ENCODE measurements at regions of chr6 and their contacts with region 1.

Region 1: GRCh38 chr6:2931970-2932748 is 29.1 kb upstream of the SERPINB9 start:
- DNase-seq: peak; percentile 91
- H3K4me3 ChIP-seq: peak overlapping the region in 1 of 4 donors; percentile 35
- H3K27ac ChIP-seq: no peak overlapping the region
- H3K4me1 ChIP-seq: peaks cover 0 to 4% (median 2%) of the 10 kb centered on the region in 4 donors
- H3K27me3 ChIP-seq: no peaks in the 10 kb centered on the region
- CTCF ChIP-seq: peak; percentile 95 to 97 (median 96)
- EP300 ChIP-seq: no peak
- POLR2A ChIP-seq: no peak

Region 2: GRCh38 chr6:2505624-2506023 is 426.5 kb before region 1 on chr6:
- in situ Hi-C with region 1: no loop called
- intact Hi-C with region 1: no loop called
- DNase-seq: no peak
- H3K4me3 ChIP-seq: no peak overlapping the region
- H3K27ac ChIP-seq: no peak overlapping the region
- H3K4me1 ChIP-seq: no peaks in the 10 kb centered on the region
- H3K27me3 ChIP-seq: peaks cover 31% of the 10 kb centered on the region
- CTCF ChIP-seq: peak in 1 of 5 experiments; percentile 8
- EP300 ChIP-seq: no peak
- POLR2A ChIP-seq: no peak

Region 3: GRCh38 chr6:2783188-2783963 is 148.8 kb before region 1 on chr6:
- in situ Hi-C with region 1: loop called in 2 of 4 experiments (anchors 10 kb)
- intact Hi-C with region 1: no loop called
- DNase-seq: peak; percentile 41
- H3K4me3 ChIP-seq: no peak overlapping the region
- H3K27ac ChIP-seq: peak overlapping the region; percentile 26 to 62 (median 49)
- H3K4me1 ChIP-seq: peaks cover 0 to 17% (median 7%) of the 10 kb centered on the region in 4 donors
- H3K27me3 ChIP-seq: no peaks in the 10 kb centered on the region
- CTCF ChIP-seq: peak in 2 of 5 experiments; percentile 8 to 19
- EP300 ChIP-seq: no peak
- POLR2A ChIP-seq: no peak

Region 4: GRCh38 chr6:2791124-2791974 is 140.8 kb before region 1 on chr6:
- in situ Hi-C with region 1: loop called in 3 of 4 experiments (anchors 10 kb)
- intact Hi-C with region 1: loop called (anchors 10 kb)
- DNase-seq: peak; percentile 77
- H3K4me3 ChIP-seq: no peak overlapping the region
- H3K27ac ChIP-seq: peak overlapping the region; percentile 71 to 82 (median 75)
- H3K4me1 ChIP-seq: peaks cover 9 to 33% (median 14%) of the 10 kb centered on the region in 4 donors
- H3K27me3 ChIP-seq: no peaks in the 10 kb centered on the region
- CTCF ChIP-seq: peak; percentile 66 to 91 (median 72)
- EP300 ChIP-seq: no peak
- POLR2A ChIP-seq: no peak

Region 5: DNA sequence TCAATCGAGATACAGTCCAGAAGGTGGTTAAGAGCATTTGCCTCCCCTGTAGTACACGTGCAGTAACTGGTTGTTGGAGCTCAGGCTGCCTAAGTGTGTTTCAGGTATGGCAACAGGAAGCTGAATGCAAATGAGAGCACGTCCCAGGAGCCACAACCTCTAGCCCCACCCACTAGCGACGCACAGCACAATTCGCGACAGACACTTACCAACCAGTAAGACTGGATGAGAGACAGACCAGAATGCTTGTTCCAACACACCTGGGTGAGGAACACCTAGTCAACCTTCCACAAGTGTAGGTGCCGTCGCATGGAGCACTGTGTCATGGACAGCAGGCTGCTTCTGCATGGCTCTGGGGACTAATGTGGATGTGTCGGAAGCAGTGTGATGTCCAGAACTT is 83.3 kb before region 1 on chr6:
- in situ Hi-C with region 1: loop called in 1 of 4 experiments (anchors 10 kb)
- intact Hi-C with region 1: loop called (anchors 5 kb)
- DNase-seq: peak; percentile 58
- H3K4me3 ChIP-seq: no peak overlapping the region
- H3K27ac ChIP-seq: no peak overlapping the region
- H3K4me1 ChIP-seq: peaks cover 3 to 18% (median 11%) of the 10 kb centered on the region in 4 donors
- H3K27me3 ChIP-seq: no peaks in the 10 kb centered on the region
- CTCF ChIP-seq: no peak
- EP300 ChIP-seq: no peak
- POLR2A ChIP-seq: no peak

Region 6: DNA sequence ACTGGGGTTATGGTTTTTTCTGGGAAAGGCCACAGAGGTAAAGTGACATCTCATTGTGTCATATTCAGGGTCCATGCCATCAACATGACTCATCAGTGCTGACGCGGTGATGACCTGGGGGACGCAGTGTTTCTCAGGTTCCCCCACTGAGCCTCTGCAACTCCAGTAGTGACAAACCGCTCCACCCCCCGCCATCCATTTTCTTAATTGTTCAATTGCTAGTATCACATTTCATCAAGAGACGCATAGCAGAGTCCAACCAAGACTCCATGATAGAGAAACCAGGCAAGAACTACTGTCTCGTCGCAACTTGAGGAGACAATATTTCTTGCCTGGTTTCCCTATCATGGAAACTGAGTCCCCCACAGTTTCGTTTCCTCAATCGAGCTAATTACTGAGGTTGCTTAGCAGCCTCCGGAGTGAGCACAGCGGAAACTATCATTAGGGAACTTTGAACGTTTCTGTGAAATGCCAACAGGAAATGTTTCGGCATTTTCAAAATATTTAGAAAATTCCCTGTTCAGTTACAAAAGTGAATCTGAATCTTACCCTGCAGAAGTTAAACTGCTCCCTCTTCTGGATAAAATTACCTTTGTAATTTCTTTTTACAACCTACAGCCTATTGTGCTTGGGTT is 78.3 kb before region 1 on chr6:
- in situ Hi-C with region 1: loop called in 1 of 4 experiments (anchors 10 kb)
- intact Hi-C with region 1: loop called (anchors 5 kb)
- DNase-seq: peak; percentile 54
- H3K4me3 ChIP-seq: peak overlapping the region in 3 of 4 donors; percentile 21 to 46 (median 31)
- H3K27ac ChIP-seq: peak overlapping the region; percentile 49 to 63 (median 56)
- H3K4me1 ChIP-seq: peaks cover 16 to 29% (median 22%) of the 10 kb centered on the region in 4 donors
- H3K27me3 ChIP-seq: no peaks in the 10 kb centered on the region
- CTCF ChIP-seq: peak; percentile 24 to 52 (median 35)
- EP300 ChIP-seq: no peak
- POLR2A ChIP-seq: no peak

Region 7: DNA sequence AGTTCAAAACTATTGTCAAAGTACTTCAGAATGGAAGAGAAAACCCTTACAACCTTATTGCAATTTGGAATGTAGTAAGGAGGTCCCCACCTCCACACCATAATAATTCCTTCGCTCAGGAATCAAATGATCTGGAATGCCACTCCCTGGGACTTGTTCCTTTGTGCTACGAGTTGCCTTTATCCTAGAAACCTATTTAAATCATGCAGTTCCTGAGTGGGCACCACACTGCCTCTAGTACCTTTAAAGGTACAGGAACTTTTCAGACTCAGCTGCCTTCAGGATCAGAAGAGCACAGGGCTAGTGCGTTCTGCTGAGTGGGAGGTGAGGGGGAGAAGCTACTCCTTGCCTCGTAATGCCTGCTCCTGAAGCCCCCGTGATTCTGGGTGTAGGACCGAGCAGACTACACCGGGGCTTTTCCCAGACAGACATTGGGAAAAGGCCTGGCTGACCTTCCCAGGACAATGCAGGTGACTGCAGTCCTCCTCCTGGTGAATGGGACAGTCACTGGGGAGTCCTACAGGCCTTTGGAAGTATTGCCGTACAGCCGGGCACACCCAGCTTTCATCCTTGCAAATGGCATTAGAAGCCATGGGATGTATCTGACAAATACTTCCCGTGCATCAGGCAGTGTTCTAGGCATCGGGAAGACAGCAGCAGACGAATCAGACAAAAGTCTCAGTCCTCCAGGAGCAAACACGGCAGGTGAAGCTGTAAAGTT is 307.1 kb after region 1 on chr6:
- in situ Hi-C with region 1: no loop called
- intact Hi-C with region 1: no loop called
- DNase-seq: no peak
- H3K4me3 ChIP-seq: no peak overlapping the region
- H3K27ac ChIP-seq: no peak overlapping the region
- H3K4me1 ChIP-seq: no peaks in the 10 kb centered on the region
- H3K27me3 ChIP-seq: peaks cover 58% of the 10 kb centered on the region
- CTCF ChIP-seq: peak in 4 of 5 experiments; percentile 14 to 19 (median 15)
- EP300 ChIP-seq: no peak
- POLR2A ChIP-seq: no peak